Activated naive CD8-positive, alpha-beta T cell treated with anti-CD3 and anti-CD28 coated beads, Interleukin-2, amount 10 ng/mL, durations not matched to agents 7 days and 5 days (primary cell): ENCODE measurements at regions of chr14 and their contacts with region 1.

Region 1: DNA sequence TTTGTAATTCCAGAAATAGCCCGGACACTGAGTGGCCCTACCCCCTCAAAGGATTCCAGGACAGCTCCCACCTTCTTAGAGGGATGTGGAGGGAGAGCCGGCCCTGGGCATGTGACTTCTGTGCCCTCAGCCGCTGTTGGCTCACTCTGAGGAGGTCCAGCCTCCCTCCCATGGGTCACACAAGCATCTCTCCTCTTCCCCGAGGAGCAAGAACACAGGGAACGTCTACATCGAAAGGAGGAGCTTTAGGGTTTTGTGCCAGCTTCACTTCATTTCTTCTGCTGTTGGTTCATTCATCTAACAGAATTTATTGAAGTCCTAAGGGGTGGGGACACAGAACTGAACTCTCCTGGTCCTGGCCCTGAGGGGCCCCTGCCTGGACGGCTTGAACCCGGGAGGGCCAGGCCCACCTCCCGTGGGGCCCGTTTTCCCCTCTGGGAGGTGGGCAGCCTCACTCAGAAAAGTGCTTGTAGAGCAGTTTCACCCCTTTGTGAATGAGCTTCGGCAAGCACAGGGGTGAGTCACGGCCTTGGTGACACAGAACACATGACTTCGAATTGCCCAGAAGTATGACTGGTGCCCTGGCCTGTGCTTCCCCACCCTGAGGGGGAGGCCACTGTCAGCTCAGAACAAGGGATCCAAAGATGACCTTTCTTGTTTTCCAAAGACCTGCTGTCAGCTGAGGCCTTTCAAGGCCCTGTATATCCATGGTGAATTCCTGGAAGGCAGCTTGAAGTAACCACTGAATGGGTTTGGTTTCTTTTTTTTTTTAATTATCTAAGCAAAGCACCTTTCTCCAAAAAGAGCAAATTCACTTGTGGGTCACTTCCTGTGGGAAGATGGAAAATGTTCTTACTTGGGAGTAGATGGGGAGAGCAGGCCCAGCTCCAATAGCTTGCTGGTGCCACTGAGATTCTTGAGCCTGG is 39.2 kb downstream of the NFKBIA start:
- DNase-seq: peak; percentile 51
- ATAC-seq: peak; percentile 58
- H3K4me3 Mint-ChIP-seq: peak overlapping the region; percentile 7
- H3K27ac Mint-ChIP-seq: peak overlapping the region; percentile 71
- H3K4me1 Mint-ChIP-seq: peaks cover 39% of the 10 kb centered on the region
- H3K27me3 Mint-ChIP-seq: no peaks in the 10 kb centered on the region

Region 2: GRCh38 chr14:35247777-35248475 is 117.5 kb before region 1 on chr14:
- POLR2A ChIA-PET with region 1: no interaction called
- DNase-seq: no peak
- ATAC-seq: no peak
- H3K4me3 Mint-ChIP-seq: no peak overlapping the region
- H3K27ac Mint-ChIP-seq: no peak overlapping the region
- H3K4me1 Mint-ChIP-seq: peaks cover 22% of the 10 kb centered on the region
- H3K27me3 Mint-ChIP-seq: no peaks in the 10 kb centered on the region

Region 3: GRCh38 chr14:35258420-35258819 is 107.0 kb before region 1 on chr14:
- POLR2A ChIA-PET with region 1: no interaction called
- DNase-seq: no peak
- ATAC-seq: no peak
- H3K4me3 Mint-ChIP-seq: no peak overlapping the region
- H3K27ac Mint-ChIP-seq: no peak overlapping the region
- H3K4me1 Mint-ChIP-seq: peaks cover 12% of the 10 kb centered on the region
- H3K27me3 Mint-ChIP-seq: no peaks in the 10 kb centered on the region

Region 4: GRCh38 chr14:35285168-35286002 is 80.0 kb before region 1 on chr14:
- POLR2A ChIA-PET with region 1: interaction called, 37 read pairs
- DNase-seq: no peak
- ATAC-seq: peak; percentile 79
- H3K4me3 Mint-ChIP-seq: peak overlapping the region; percentile 78
- H3K27ac Mint-ChIP-seq: peak overlapping the region; percentile 91
- H3K4me1 Mint-ChIP-seq: peaks cover 41% of the 10 kb centered on the region
- H3K27me3 Mint-ChIP-seq: no peaks in the 10 kb centered on the region

Region 5: DNA sequence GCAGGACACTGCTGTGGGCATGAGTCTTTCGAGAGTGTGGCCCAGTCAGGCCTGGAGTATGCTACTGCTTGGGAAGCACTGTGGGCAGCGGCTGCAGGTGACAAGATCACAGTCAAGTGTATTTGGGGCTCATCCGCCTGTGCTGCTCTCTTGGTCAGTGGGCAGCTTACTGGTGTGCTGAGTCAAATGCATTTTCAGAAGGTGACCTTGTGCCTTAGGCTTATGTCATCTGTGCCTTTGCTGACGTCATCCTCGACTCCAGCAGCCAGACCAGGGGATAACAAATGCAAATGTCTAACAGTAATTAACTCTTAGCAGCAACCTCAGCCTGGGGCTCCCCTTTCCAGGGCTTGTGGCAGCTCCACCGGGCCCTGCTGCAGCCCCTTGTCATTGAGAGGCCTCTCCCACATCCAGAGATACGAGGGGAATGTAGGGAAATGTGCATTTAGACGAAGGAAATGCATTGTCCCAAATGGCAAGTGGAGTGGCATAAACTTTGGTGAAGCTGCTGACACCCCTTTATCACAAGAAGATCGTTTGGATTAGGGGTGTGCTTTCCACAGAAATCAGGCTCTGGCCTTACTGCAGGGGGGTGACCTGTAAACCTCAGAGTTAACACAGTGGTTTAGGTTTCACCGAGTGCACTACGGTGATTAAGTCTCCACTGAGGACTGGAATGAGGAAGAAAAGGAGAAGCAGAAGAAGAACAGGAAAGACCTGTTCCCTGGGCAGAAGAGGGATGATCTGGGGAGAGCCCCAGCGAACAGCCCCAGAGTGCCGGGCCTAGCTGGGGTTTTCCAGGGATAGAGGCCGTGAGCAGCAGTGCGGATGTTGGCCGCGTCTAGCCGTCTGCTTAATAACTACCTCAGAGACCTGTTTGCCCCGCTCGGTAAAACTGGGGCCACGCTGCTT is 33.5 kb before region 1 on chr14:
- POLR2A ChIA-PET with region 1: interaction called, 29 read pairs
- DNase-seq: no peak
- ATAC-seq: no peak
- H3K4me3 Mint-ChIP-seq: no peak overlapping the region
- H3K27ac Mint-ChIP-seq: peak overlapping the region; percentile 87
- H3K4me1 Mint-ChIP-seq: peaks cover 29% of the 10 kb centered on the region
- H3K27me3 Mint-ChIP-seq: no peaks in the 10 kb centered on the region

Region 6: GRCh38 chr14:35341446-35342159 is 23.8 kb before region 1 on chr14:
- POLR2A ChIA-PET with region 1: interaction called, 22 read pairs
- DNase-seq: no peak
- ATAC-seq: peak; percentile 51
- H3K4me3 Mint-ChIP-seq: peak overlapping the region; percentile 13
- H3K27ac Mint-ChIP-seq: peak overlapping the region; percentile 79
- H3K4me1 Mint-ChIP-seq: peaks cover 31% of the 10 kb centered on the region
- H3K27me3 Mint-ChIP-seq: no peaks in the 10 kb centered on the region